ENCODE measurements at regions of chr12 and their contacts with region 1.

Region 1: GRCh38 chr12:949453-950191 is at the start of gene RAD52:
- DNase-seq: peak; percentile 99
- H3K4me3 ChIP-seq: peak within 1 kb of the TSS; percentile 68 to 84 (median 78)
- H3K27ac ChIP-seq: peak within 1 kb of the TSS; percentile 89 to 96 (median 94)
- H3K4me1 ChIP-seq: peaks cover 0 to 21% (median 11%) of the 10 kb centered on the region in 4 donors
- H3K27me3 ChIP-seq: no peaks in the 10 kb centered on the region
- CTCF ChIP-seq: peak; percentile 87 to 99 (median 99)
- EP300 ChIP-seq: peak in 1 of 4 donors; percentile 77
- POLR2A ChIP-seq: peak; percentile 47 to 70
- total RNA-seq, gene RAD52: 12.8 to 41.8 (median 18.5) TPM

Region 2: GRCh38 chr12:569803-570434 is 379.7 kb before region 1 on chr12:
- intact Hi-C with region 1: loop called (anchors 1 kb)
- DNase-seq: peak; percentile 93
- H3K4me3 ChIP-seq: peak overlapping the region; percentile 49 to 67 (median 62)
- H3K27ac ChIP-seq: peak overlapping the region; percentile 88 to 91 (median 90)
- H3K4me1 ChIP-seq: peaks cover 0 to 32% (median 24%) of the 10 kb centered on the region in 4 donors
- H3K27me3 ChIP-seq: no peaks in the 10 kb centered on the region
- CTCF ChIP-seq: peak; percentile 84 to 94 (median 90)
- EP300 ChIP-seq: no peak
- POLR2A ChIP-seq: no peak

Region 3: DNA sequence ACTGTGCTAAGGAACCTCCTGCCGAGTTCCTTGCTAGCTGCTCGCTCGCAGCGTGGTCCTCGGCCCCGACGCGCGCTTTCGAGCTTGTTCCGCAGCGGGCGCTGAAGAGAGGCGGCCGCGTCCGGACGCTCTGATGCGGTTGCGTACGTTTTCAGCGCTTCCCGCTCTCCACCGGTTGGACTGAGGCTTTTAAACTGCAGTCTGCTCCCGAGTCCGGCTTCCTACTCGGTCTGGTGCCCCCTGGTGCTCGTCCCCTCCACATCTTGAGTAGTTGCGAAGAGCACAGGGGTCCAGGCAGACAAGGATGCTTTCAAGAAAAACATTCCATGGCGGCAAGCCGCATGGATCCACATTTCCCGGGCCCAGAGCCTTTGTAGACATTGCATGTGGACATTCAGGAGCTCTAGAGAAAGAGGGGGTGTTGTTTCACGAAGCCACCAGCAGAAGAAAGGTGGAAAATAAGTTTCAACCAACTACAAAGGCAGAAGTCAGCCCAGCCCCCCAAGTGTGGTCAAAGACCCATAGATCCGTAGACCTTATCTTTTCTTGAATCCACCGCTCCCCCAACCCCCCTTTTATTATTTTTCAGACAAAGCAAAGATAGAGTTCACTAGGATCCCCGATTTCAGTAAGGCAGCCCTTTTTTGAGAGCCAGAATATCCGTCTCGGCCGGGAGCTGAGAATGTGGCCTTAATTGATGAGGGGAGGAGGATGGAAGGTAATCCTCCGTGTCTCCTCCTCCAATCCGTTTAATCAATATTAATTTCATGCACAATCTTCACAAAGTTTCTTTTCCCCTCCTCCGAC is 198.2 kb before region 1 on chr12:
- intact Hi-C with region 1: loop called (anchors 2 kb)
- DNase-seq: peak; percentile 96
- H3K4me3 ChIP-seq: peak overlapping the region; percentile 27 to 97 (median 93)
- H3K27ac ChIP-seq: peak overlapping the region; percentile 97 to 99 (median 99)
- H3K4me1 ChIP-seq: peaks cover 0 to 42% (median 24%) of the 10 kb centered on the region in 4 donors
- H3K27me3 ChIP-seq: no peaks in the 10 kb centered on the region
- CTCF ChIP-seq: peak; percentile 66 to 78 (median 72)
- EP300 ChIP-seq: peak in 1 of 4 donors; percentile 5
- POLR2A ChIP-seq: no peak

Region 4: DNA sequence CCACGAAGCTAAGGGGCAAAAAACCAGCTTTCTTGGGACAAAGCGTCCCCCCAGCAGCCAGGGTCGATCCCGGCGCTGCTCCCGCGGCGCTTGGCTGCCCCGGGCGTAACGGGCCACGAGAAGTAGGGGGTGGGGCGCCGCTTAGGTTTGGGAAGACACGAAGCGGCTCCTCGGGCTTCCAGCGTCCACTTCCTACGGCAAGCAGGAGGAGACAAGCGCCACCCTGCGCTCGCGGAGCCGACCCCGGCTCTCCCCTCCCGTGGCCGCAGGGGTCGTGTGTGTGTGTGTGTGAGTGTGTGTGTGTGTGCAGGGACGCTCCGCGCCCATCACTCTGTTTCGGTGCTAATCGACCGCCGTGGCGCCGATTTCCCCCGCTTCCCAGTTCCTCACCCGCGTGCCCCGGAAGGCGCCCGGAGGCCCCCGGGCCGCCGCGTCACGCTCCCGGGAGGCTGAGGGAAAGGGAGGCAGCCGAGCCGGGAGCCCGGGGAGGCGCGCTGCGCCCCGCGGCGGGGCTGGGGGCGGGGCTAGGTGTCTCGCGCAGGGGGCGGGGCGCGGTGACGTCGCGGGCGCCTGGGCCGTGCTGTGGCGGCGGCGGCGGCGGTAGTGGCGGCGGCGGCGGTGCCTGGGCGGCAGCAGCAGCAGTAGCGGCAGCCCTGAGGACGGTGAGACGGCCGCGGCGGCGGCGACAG is 41.2 kb after region 1 on chr12 and contains the start of gene ERC1:
- intact Hi-C with region 1: loop called (anchors 1 kb)
- DNase-seq: peak; percentile 94
- H3K4me3 ChIP-seq: peak within 1 kb of the TSS; percentile 77 to 97 (median 86)
- H3K27ac ChIP-seq: peak within 1 kb of the TSS; percentile 98 to 99 (median 98)
- H3K4me1 ChIP-seq: peaks cover 0 to 45% (median 34%) of the 10 kb centered on the region in 4 donors
- H3K27me3 ChIP-seq: no peaks in the 10 kb centered on the region
- CTCF ChIP-seq: no peak
- EP300 ChIP-seq: peak in 1 of 4 donors; percentile 8
- POLR2A ChIP-seq: peak; percentile 50 to 59
- total RNA-seq, gene ERC1: 34.6 to 97.8 (median 42.4) TPM

Region 5: DNA sequence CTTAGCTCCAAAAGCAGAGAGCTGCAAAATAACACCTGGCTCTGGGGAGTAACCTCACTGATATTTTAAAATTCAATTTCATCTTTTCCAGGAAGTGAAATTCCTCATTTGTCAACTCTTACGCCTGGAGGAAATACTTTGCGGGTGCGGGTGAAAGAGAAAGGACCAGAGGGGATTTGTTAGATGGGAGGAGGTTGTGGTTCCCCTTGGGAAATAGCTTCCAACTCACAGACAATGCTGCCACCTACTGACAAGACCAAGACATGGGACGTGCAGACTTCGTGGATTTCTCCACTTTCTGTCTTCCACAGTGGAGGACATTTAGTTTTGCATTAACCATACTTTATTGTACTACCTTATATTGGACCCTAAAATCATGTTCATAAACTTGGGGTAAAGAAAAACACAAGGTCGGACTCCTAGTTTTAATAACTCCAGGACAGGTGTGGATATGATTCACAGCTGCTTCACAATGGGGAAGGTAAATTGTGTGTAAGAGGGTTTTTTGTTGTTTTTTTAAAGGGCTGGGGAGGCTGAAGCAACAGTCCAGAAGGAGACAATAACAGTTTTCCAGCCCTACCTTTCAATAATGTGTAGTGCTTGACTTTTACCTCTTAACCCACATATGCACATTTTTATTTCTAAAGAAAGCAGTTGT is 633.9 kb after region 1 on chr12:
- intact Hi-C with region 1: loop called (anchors 10 kb)
- DNase-seq: peak; percentile 86
- H3K4me3 ChIP-seq: peak overlapping the region in 3 of 4 donors; percentile 20 to 31 (median 24)
- H3K27ac ChIP-seq: no peak overlapping the region
- H3K4me1 ChIP-seq: peaks cover 0 to 30% (median 24%) of the 10 kb centered on the region in 4 donors
- H3K27me3 ChIP-seq: no peaks in the 10 kb centered on the region
- CTCF ChIP-seq: peak; percentile 85 to 94 (median 89)
- EP300 ChIP-seq: no peak
- POLR2A ChIP-seq: no peak

Measured in sigmoid colon (tissue), 7 donors.